HCT116 (cell line): ENCODE measurements at regions of chr12 and their contacts with region 1.

Region 1: GRCh38 chr12:11486623-11487444 is 91.5 kb upstream of the PRB2 start:
- DNase-seq: peak; percentile 83
- ATAC-seq: peak; percentile 93
- H3K4me3 ChIP-seq: no peak overlapping the region
- H3K27ac ChIP-seq: no peak overlapping the region
- H3K4me1 ChIP-seq: 0 out of 4 replicates have a peak, but pooled peaks cover 0 to 3% of the 10 kb centered on the region in 2 experiments
- H3K27me3 ChIP-seq: peaks cover 23% of the 10 kb centered on the region; the same call in 1 of the 2 replicates
- CTCF ChIP-seq: peak; percentile 86 to 100 (median 98)
- POLR2A ChIP-seq: no peak
- RAD21 ChIP-seq: peak; percentile 98

Region 2: GRCh38 chr12:10153271-10154144 is 1333.3 kb before region 1 on chr12:
- CTCF ChIA-PET with region 1: no interaction called
- POLR2A ChIA-PET with region 1: no interaction called
- RAD21 ChIA-PET with region 1: no interaction called
- intact Hi-C with region 1: loop called (anchors 5 kb)
- DNase-seq: peak; percentile 21
- ATAC-seq: peak; percentile 81
- H3K4me3 ChIP-seq: peak overlapping the region; percentile 23 to 38; a peak in 3 of 4 replicates
- H3K27ac ChIP-seq: peak overlapping the region; percentile 4; the same call in 1 of the 2 replicates
- H3K4me1 ChIP-seq: peaks cover 0 to 5% of the 10 kb centered on the region in 2 experiments; a peak in 1 of 4 replicates
- H3K27me3 ChIP-seq: no peaks in the 10 kb centered on the region
- CTCF ChIP-seq: peak; percentile 65 to 78 (median 74)
- POLR2A ChIP-seq: no peak
- RAD21 ChIP-seq: peak; percentile 65

Region 3: GRCh38 chr12:10331642-10332239 is 1155.1 kb before region 1 on chr12:
- CTCF ChIA-PET with region 1: no interaction called
- POLR2A ChIA-PET with region 1: no interaction called
- RAD21 ChIA-PET with region 1: no interaction called
- intact Hi-C with region 1: loop called (anchors 10 kb)
- DNase-seq: peak; percentile 56
- ATAC-seq: peak; percentile 98
- H3K4me3 ChIP-seq: no peak overlapping the region
- H3K27ac ChIP-seq: no peak overlapping the region
- H3K4me1 ChIP-seq: peaks cover 0 to 3% of the 10 kb centered on the region in 2 experiments; a peak in 1 of 4 replicates
- H3K27me3 ChIP-seq: no peaks in the 10 kb centered on the region
- CTCF ChIP-seq: peak; percentile 81 to 95 (median 83)
- POLR2A ChIP-seq: no peak
- RAD21 ChIP-seq: peak; percentile 94

Region 4: GRCh38 chr12:10867381-10867780 is 619.5 kb before region 1 on chr12:
- CTCF ChIA-PET with region 1: no interaction called
- POLR2A ChIA-PET with region 1: no interaction called
- RAD21 ChIA-PET with region 1: no interaction called
- intact Hi-C with region 1: loop called (anchors 10 kb)
- DNase-seq: no peak
- ATAC-seq: no peak
- H3K4me3 ChIP-seq: no peak overlapping the region
- H3K27ac ChIP-seq: no peak overlapping the region
- H3K4me1 ChIP-seq: no peaks in the 10 kb centered on the region
- H3K27me3 ChIP-seq: no peaks in the 10 kb centered on the region
- CTCF ChIP-seq: 0 out of 6 replicates have a peak, but pooled peaks of 2 of the 3 experiments have one; percentile 5 to 10
- POLR2A ChIP-seq: no peak
- RAD21 ChIP-seq: peak; percentile 32; the same call in 1 of the 2 replicates

Region 5: GRCh38 chr12:11228296-11228879 is 258.4 kb before region 1 on chr12:
- CTCF ChIA-PET with region 1: interaction called, 35 read pairs
- POLR2A ChIA-PET with region 1: no interaction called
- RAD21 ChIA-PET with region 1: interaction called in 1 of 2 experiments, 3 read pairs
- intact Hi-C with region 1: loop called (anchors 1 kb)
- DNase-seq: peak; percentile 35
- ATAC-seq: peak; percentile 100
- H3K4me3 ChIP-seq: no peak overlapping the region
- H3K27ac ChIP-seq: no peak overlapping the region
- H3K4me1 ChIP-seq: no peaks in the 10 kb centered on the region
- H3K27me3 ChIP-seq: peaks cover 36% of the 10 kb centered on the region; the same call in 1 of the 2 replicates
- CTCF ChIP-seq: peak; percentile 78 to 89 (median 83)
- POLR2A ChIP-seq: no peak
- RAD21 ChIP-seq: peak; percentile 82